ENCODE measurements at regions of chr4 and their contacts with region 1.

Region 1: GRCh38 chr4:10013722-10014121 is 7.6 kb downstream of the SLC2A9 start:
- DNase-seq: peak; percentile 86
- ATAC-seq: peak; percentile 79
- H3K4me3 Mint-ChIP-seq: no peak overlapping the region
- H3K27ac Mint-ChIP-seq: no peak overlapping the region
- H3K4me1 Mint-ChIP-seq: peaks cover 6% of the 10 kb centered on the region
- H3K27me3 Mint-ChIP-seq: peaks cover 2% of the 10 kb centered on the region; the same call in 1 of the 2 replicates
- CTCF ChIP-seq: peak; percentile 55

Region 2: GRCh38 chr4:9691238-9692065 is 322.3 kb before region 1 on chr4:
- CTCF ChIA-PET with region 1: interaction called, 17 read pairs
- POLR2A ChIA-PET with region 1: no interaction called
- DNase-seq: peak; percentile 97
- ATAC-seq: peak; percentile 100
- H3K4me3 Mint-ChIP-seq: peak overlapping the region; percentile 82
- H3K27ac Mint-ChIP-seq: peak overlapping the region; percentile 88
- H3K4me1 Mint-ChIP-seq: peaks cover 22% of the 10 kb centered on the region
- H3K27me3 Mint-ChIP-seq: peaks cover 7% of the 10 kb centered on the region
- CTCF ChIP-seq: no peak

Region 3: DNA sequence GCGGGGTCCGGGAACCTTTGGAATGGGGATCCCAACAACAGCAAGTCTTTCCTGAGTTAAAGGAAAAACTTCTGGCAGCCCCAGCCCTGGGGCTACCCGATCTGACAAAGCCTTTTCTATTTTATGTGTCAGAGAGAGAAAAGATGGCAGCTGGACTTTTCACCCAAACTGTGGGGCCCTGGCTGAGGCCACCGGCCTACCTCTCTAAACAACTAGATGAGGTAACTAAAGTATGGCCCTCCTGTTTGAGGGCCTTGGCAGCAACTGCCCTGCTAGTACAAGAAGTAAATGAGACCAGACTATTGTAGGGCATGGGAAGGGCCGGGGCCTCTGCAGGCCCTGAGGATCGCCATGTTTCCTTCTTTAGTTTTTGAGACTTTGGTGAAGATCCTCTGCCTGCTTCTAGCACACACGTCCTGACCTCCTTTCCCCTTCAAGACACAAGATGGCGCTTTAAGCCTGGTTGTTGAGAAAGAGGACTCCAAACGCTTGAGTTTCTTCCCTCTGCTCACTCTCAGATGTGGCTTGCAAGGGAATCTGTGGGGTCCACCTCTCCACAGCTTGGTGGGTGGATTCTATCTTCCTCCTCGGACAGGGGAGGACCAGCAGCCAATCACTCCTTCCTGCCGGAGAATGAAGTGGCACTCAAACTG is 250.8 kb before region 1 on chr4:
- CTCF ChIA-PET with region 1: interaction called, 118 read pairs
- POLR2A ChIA-PET with region 1: no interaction called
- DNase-seq: peak; percentile 58
- ATAC-seq: no peak; the same call in 1 of the 2 replicates
- H3K4me3 Mint-ChIP-seq: no peak overlapping the region
- H3K27ac Mint-ChIP-seq: no peak overlapping the region
- H3K4me1 Mint-ChIP-seq: peaks cover 2% of the 10 kb centered on the region
- H3K27me3 Mint-ChIP-seq: peaks cover 3% of the 10 kb centered on the region; the same call in 1 of the 2 replicates
- CTCF ChIP-seq: peak; percentile 44; the same call in 1 of the 2 replicates

Region 4: DNA sequence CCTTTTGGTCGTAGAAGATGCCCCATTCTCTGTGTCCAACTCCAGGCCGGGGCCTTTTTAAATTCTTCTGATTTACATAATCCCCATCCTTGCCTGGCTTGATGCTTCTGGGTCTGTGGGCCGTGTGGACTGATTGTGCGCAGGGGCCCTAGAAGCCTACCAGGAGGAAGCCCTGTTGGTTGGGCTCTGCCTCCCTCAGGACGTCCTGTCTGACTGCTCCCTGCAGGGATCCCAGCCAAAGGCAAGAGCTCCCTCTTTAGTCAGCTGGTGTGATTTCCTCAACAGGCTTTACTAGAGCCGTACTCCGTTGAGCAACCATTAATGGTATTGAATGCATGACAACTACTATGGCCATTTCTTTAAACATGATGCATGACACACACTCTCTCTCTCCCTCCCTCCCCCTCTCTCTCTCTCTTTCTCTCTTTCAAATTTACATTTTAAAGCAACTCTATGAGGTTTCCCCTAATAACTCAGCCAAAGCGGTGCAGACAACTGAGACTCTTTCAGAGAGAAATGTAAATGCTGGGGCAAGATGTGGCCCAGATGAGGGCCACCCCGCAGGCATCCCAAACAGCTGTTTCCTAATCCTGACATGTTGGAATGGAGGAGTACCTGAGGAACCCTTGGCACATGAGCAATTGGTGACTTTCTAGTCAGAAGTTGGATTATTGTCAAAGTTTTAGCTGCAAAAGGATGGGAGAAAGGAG is 115.0 kb before region 1 on chr4:
- CTCF ChIA-PET with region 1: interaction called, 45 read pairs
- POLR2A ChIA-PET with region 1: no interaction called
- DNase-seq: peak; percentile 76
- ATAC-seq: peak; percentile 98
- H3K4me3 Mint-ChIP-seq: no peak overlapping the region
- H3K27ac Mint-ChIP-seq: no peak overlapping the region
- H3K4me1 Mint-ChIP-seq: peaks cover 12% of the 10 kb centered on the region
- H3K27me3 Mint-ChIP-seq: no peaks in the 10 kb centered on the region
- CTCF ChIP-seq: no peak

Region 5: DNA sequence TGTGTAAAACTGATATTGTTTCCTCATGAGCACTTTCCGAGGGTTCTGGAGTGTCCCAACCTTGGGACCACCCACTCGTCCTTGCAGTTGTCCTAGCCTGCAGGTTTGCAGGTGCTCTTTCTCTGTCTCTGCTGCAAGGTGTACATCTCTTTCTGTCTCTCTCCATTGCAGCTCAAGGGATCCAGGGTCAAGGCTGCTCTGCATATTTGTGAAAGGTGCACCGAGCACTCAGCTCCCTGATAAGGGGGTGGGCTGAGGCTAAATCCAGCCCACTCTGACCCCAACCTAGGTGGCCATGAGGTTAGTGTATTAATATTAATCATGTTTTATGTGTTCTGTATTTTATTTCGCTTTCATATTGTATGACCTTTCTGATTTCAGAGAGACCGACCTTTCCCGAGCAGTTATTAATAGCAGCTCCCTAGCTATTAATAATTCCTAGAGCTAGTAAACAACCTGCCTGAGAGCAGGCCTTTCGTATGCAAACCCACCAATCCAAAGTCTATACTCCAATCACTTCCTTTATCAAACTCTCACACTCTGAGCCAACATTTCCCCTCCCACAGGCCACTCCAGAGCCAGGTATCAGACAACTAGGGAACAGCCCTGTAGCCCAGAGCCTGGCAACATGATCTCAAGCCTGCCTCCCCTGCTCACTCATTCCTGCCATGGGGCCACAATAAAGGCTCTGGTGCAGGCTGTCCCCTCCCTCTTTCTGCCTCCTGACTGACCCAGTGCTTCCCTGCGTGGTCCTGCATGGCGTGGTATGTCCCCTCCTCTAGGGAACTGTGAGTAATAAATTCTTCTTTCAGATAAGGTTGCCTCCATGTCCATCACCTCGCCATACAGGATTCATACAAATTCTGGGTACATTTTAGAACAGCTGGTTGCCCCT is 66.3 kb before region 1 on chr4:
- CTCF ChIA-PET with region 1: interaction called, 11 read pairs
- POLR2A ChIA-PET with region 1: no interaction called
- DNase-seq: no peak
- ATAC-seq: no peak; the same call in 1 of the 2 replicates
- H3K4me3 Mint-ChIP-seq: no peak overlapping the region
- H3K27ac Mint-ChIP-seq: no peak overlapping the region
- H3K4me1 Mint-ChIP-seq: peaks cover 10% of the 10 kb centered on the region
- H3K27me3 Mint-ChIP-seq: no peaks in the 10 kb centered on the region
- CTCF ChIP-seq: no peak

Region 6: DNA sequence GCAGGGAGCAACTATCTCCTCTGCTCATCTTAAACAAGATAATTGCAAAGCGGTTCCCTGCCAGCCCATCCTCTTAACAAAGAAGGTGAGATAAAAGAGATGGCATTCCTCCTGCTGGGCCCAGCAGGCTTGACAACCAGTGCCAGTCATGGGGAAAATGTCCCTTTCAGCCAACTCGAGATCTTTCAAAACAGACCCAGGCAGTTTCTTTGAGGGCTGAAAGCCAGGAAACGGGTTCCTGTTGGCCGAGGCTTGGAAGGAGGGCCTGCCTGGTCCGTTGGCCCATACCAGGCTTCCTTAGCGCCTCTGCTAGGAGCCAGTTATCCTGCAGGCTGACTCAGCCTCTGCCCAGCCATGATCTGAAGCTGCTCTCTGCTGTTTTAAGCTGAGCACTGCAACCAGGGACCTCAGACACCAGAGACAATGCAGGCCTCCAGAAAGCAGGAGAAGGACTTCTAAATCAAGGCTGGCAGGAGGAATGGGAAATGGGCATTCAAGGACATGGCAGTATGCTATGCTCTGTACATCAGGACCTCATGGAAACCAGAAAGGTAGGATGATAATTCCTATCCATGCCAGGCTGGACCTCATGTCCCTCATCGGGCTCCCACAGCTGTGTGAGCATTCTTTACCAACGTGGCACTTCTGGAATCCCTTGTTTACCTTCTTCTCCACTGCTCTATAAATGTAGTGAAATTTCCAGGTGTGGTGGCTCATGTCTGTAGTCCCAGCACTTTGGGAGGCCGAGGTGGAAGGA is 50.0 kb after region 1 on chr4:
- CTCF ChIA-PET with region 1: interaction called, 16 read pairs
- POLR2A ChIA-PET with region 1: no interaction called
- DNase-seq: peak; percentile 48
- ATAC-seq: peak; percentile 99
- H3K4me3 Mint-ChIP-seq: no peak overlapping the region
- H3K27ac Mint-ChIP-seq: no peak overlapping the region
- H3K4me1 Mint-ChIP-seq: peaks cover 12% of the 10 kb centered on the region
- H3K27me3 Mint-ChIP-seq: no peaks in the 10 kb centered on the region
- CTCF ChIP-seq: no peak

Measured in WTC11 (cell line).